WTC11 (cell line): ENCODE measurements at regions of chr11 and their contacts with region 1.

Region 1: DNA sequence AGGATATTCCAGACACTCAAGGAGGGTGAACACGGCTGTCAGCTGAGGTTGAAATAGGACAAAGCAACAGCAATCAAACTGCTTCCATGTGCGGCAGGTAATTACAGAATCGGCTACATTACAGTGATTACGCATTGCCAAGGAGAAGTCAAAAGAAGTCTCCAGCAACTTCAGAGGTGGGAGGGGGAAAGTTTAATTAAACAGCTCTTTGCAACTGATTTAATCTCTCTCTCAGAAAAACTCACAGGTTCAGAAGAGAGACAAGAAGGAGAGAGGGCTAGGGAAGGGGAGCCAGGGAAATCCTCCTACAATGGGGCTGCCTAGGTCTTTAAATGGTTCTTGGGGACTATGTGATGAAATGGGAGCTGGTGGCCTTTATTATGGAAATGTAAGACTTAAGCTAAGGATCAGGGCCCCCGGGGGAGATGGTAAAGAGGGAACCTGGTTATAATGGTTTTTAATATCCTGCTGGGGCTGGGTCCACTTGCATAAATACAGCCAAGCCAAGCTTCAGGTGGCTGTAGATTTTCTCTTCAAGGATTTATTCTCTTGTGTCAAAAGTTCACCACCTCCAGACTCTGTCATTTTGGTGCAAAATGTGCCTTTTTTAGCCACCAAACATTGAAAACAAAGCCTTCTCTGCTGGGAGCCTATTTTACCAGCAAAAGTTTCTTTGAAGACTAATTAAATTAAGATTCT is 354.7 kb upstream of the NARS2 start:
- DNase-seq: peak; percentile 52
- ATAC-seq: peak; percentile 94
- H3K4me3 Mint-ChIP-seq: peak overlapping the region; percentile 48
- H3K27ac Mint-ChIP-seq: peak overlapping the region; percentile 53
- H3K4me1 Mint-ChIP-seq: peaks cover 58% of the 10 kb centered on the region
- H3K27me3 Mint-ChIP-seq: peaks cover 98% of the 10 kb centered on the region
- CTCF ChIP-seq: no peak

Region 2: DNA sequence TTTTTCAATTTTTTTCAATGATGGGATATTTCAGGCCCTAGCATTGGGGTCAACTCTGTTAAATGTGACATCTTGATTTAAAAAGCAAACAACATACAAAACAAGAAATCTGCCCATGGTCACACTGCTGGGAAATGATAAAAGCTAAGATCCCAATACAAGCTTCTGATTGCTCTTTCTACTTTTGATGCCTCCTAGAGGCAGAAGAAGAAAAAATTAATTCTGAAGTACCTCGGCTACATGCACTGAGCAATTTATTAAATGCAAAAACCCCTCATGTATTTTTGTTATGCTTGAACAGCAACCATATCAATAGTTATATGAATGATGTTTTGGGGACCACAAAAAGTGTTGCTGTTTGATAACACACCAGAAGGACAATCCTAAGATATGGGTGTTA is 12.6 kb before region 1 on chr11:
- CTCF ChIA-PET with region 1: interaction called, 10 read pairs
- POLR2A ChIA-PET with region 1: no interaction called
- DNase-seq: no peak
- ATAC-seq: no peak
- H3K4me3 Mint-ChIP-seq: no peak overlapping the region
- H3K27ac Mint-ChIP-seq: no peak overlapping the region
- H3K4me1 Mint-ChIP-seq: peaks cover 8% of the 10 kb centered on the region; the same call in 1 of the 2 replicates
- H3K27me3 Mint-ChIP-seq: no peaks in the 10 kb centered on the region; the same call in 1 of the 2 replicates
- CTCF ChIP-seq: no peak

Region 3: DNA sequence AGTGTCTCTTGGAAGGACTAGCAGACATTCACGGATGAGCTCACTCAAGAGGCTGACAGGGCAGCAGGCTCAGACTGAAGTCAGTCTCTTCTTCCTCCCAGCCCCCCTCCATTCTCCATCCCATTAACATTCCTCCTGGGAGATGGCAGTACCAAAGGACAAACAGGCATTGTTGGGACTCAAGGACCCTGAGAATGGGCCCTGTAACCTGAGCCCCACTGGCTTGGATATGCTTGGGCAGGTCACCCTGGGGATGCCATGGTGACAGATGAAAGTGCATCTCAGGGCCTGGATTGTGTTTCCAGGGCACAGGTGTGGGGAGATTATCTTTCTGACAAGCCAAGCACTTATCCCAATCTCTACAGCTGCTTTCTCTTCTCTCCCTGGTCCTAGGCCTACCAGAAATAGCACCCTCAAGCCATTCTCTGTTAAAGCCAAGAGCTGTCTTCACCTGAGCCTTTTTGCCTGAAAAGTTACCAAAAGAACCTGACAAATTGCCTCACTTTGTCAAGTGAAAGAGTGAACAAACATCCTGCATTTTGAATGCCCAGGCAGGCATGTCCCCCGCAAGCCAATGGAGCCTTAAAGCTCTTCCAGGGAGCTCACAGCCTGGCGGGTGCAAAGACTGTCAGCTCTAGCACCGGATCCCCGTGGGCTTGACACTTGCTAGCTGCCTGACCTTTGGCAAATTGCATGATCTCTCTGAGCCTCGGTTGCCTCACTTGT is 11.3 kb after region 1 on chr11:
- CTCF ChIA-PET with region 1: interaction called, 15 read pairs
- POLR2A ChIA-PET with region 1: interaction called, 3 read pairs
- DNase-seq: peak; percentile 55
- ATAC-seq: peak; percentile 94
- H3K4me3 Mint-ChIP-seq: no peak overlapping the region
- H3K27ac Mint-ChIP-seq: 0 out of 2 replicates have a peak overlapping the region, but pooled peaks have one; percentile 44
- H3K4me1 Mint-ChIP-seq: peaks cover 41% of the 10 kb centered on the region
- H3K27me3 Mint-ChIP-seq: peaks cover 5% of the 10 kb centered on the region
- CTCF ChIP-seq: no peak